ENCODE measurements at regions of chr13 and their contacts with region 1.

Region 1: GRCh38 chr13:27349458-27349857 is 75.0 kb upstream of the GTF3A start:
- DNase-seq: no peak

Region 2: GRCh38 chr13:27117158-27117557 is 232.3 kb before region 1 on chr13:
- CTCF ChIA-PET with region 1: no interaction called
- POLR2A ChIA-PET with region 1: no interaction called
- DNase-seq: no peak

Region 3: GRCh38 chr13:27339299-27339698 is 10.2 kb before region 1 on chr13:
- CTCF ChIA-PET with region 1: interaction called, 22 read pairs
- POLR2A ChIA-PET with region 1: no interaction called
- DNase-seq: peak; percentile 65

Measured in HEK293T (cell line).